ENCODE measurements at regions of chr12 and their contacts with region 1.

Region 1: DNA sequence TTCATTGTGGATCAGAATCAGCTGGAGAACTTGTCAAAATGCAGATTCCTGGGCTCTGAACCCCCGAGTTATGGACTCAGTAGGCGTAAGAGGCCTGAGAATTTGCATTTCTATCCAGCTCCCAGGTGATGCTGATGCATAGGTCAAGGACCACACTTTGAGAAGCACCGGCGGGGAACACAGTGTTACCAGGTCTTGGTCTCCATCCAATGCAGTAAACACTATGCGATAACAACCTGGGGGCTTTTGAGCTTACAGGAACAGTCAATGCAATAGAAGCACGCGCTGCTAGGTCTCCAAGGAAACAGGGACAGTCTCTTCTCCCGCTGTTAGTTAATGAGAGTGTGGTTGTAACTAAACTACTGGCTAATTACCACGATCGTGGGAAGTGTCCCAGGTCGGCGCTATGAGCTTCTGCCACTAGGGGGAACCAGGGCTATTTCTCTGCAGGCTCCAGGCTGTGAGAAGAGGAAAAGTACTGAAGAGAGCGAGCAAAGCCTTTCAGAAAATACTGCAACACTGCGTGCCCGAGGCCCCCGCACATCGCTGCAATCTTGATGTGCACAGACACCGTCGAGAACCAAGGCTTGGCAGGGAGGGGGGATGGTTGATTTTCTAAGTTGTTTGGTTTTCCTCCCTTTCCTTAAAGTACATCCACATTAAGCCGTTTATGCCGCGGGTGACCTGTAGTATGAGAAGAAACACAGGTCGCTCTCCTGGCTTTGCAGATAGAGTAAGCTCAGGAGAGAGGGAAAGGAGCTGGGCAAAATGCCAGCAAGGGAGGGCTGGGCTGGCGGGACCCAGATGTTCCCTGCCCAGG is 52.0 kb upstream of the KCNA1 start:
- DNase-seq: peak; percentile 57 to 63
- ATAC-seq: peak; percentile 71 to 90
- H3K4me3 ChIP-seq: no peak overlapping the region
- H3K27ac ChIP-seq: no peak overlapping the region
- H3K4me1 ChIP-seq: no peaks in the 10 kb centered on the region
- CTCF ChIP-seq: peak; percentile 67
- EP300 ChIP-seq: no peak
- POLR2A ChIP-seq: no peak
- RAD21 ChIP-seq: peak; percentile 50 to 66; a peak in 4 of 5 replicates

Region 2: GRCh38 chr12:4829161-4829792 is 28.4 kb before region 1 on chr12:
- CTCF ChIA-PET with region 1: interaction called, 16 read pairs
- POLR2A ChIA-PET with region 1: no interaction called
- DNase-seq: no peak
- ATAC-seq: no peak
- H3K4me3 ChIP-seq: no peak overlapping the region
- H3K27ac ChIP-seq: no peak overlapping the region
- H3K4me1 ChIP-seq: no peaks in the 10 kb centered on the region
- CTCF ChIP-seq: no peak
- EP300 ChIP-seq: no peak
- POLR2A ChIP-seq: no peak
- RAD21 ChIP-seq: no peak

Region 3: GRCh38 chr12:4894019-4894418 is 36.3 kb after region 1 on chr12:
- CTCF ChIA-PET with region 1: interaction called, 11 read pairs
- POLR2A ChIA-PET with region 1: no interaction called
- DNase-seq: no peak
- ATAC-seq: no peak
- H3K4me3 ChIP-seq: no peak overlapping the region
- H3K27ac ChIP-seq: no peak overlapping the region
- H3K4me1 ChIP-seq: no peaks in the 10 kb centered on the region
- CTCF ChIP-seq: no peak
- EP300 ChIP-seq: no peak
- POLR2A ChIP-seq: no peak
- RAD21 ChIP-seq: no peak

Region 4: DNA sequence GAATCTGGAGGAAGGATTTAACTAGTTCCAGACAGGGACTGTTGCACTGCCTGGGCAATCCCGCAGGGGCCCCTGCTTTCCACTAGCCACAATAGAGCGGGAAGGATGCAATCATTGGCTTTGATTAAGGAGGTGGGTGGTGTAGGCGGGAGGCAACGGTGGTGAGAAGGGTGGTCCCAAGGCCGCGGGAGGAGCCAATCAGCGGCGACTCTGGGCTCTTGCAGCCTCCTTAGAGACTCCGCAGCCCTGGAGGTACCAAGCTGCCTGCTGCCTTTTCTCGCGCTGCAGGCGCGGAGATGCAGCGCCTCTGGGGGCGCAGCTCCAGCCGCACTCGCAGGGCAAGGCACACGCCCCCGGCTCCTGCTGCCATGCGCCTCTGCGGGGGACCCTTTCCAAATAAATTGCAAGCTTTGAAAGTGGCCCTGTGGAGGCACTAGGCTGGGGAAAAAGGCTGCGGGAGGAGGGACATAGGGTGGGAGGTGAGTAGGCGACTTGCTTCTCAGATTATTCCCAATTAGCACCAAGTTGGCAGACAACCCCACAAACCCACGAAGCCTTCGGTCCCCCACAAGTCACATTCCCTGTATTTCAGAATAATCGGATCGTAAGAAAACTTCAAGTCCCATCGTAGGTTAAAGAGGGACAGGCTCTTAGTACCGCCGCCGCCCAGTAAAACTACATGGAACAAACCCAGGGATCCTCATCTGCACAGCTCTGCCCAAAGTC is 51.2 kb after region 1 on chr12:
- CTCF ChIA-PET with region 1: interaction called, 21 read pairs
- POLR2A ChIA-PET with region 1: no interaction called
- DNase-seq: no peak
- ATAC-seq: no peak
- H3K4me3 ChIP-seq: no peak overlapping the region
- H3K27ac ChIP-seq: no peak overlapping the region
- H3K4me1 ChIP-seq: no peaks in the 10 kb centered on the region
- CTCF ChIP-seq: no peak
- EP300 ChIP-seq: no peak
- POLR2A ChIP-seq: no peak
- RAD21 ChIP-seq: no peak

Region 5: GRCh38 chr12:4997939-4998338 is 140.3 kb after region 1 on chr12:
- CTCF ChIA-PET with region 1: interaction called, 157 read pairs
- POLR2A ChIA-PET with region 1: no interaction called
- DNase-seq: peak; percentile 21 to 26
- ATAC-seq: peak; percentile 70 to 78
- H3K4me3 ChIP-seq: no peak overlapping the region
- H3K27ac ChIP-seq: no peak overlapping the region
- H3K4me1 ChIP-seq: 0 out of 3 replicates have a peak, but pooled peaks cover 5% of the 10 kb centered on the region
- CTCF ChIP-seq: no peak
- EP300 ChIP-seq: no peak
- POLR2A ChIP-seq: no peak
- RAD21 ChIP-seq: no peak

Region 6: GRCh38 chr12:5003020-5003666 is 145.5 kb after region 1 on chr12:
- CTCF ChIA-PET with region 1: interaction called, 157 read pairs
- POLR2A ChIA-PET with region 1: no interaction called
- DNase-seq: peak; percentile 57 to 61
- ATAC-seq: peak; percentile 87 to 97
- H3K4me3 ChIP-seq: no peak overlapping the region
- H3K27ac ChIP-seq: no peak overlapping the region
- H3K4me1 ChIP-seq: no peaks in the 10 kb centered on the region
- CTCF ChIP-seq: peak; percentile 74
- EP300 ChIP-seq: no peak
- POLR2A ChIP-seq: no peak
- RAD21 ChIP-seq: peak; percentile 79 to 93

Region 7: DNA sequence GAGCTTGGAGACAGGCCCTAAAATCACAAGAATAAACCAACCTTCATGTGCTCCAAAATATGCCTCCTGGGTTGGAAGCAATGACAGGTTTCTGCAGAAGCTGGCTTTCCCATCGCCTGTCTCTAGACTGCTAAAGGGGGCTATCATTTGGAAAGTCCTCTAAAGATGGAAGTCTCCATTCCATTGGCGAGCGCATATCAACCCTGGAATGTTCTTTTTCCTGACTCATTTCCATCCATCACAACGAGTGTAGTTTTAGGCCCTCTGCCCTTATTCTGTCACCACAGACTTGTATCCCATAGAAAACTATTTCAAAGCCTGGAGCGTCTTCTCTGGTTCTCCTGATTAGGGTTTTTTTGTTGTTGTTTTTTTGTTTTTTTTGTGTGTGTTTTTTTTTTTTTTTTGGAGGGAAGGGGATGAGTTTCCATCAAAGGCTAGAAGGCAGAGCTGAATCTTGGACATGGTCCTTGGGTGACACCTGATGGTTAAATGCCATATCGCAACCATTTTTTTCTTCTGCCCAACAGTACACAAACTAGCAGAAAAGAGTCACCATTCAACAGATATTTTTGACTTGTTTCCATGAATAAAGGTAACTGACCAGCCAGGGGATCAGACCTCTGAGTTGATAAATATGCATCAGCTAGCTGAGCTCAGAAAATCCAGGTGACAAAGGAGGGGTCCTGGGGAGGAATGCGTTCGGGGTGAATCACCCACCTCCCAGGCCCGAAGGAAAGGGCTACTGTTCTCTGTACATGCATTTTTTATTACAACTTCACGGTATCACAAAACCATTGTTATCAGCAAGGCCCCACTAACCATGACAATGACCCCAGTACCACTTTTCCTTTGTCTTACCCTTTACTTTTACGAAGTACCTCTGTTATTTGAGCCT is 226.5 kb after region 1 on chr12:
- CTCF ChIA-PET with region 1: interaction called, 121 read pairs
- POLR2A ChIA-PET with region 1: no interaction called
- DNase-seq: peak; percentile 53 to 63
- ATAC-seq: peak in 1 of 2 experiments; percentile 81; a peak in 3 of 6 replicates
- H3K4me3 ChIP-seq: no peak overlapping the region
- H3K27ac ChIP-seq: no peak overlapping the region
- H3K4me1 ChIP-seq: peaks cover 5% of the 10 kb centered on the region; the same call in 1 of the 3 replicates
- CTCF ChIP-seq: peak; percentile 68
- EP300 ChIP-seq: no peak
- POLR2A ChIP-seq: no peak
- RAD21 ChIP-seq: peak; percentile 69 to 80

Measured in A549 (cell line).